ENCODE measurements at regions of chr7 and their contacts with region 1.

Region 1: DNA sequence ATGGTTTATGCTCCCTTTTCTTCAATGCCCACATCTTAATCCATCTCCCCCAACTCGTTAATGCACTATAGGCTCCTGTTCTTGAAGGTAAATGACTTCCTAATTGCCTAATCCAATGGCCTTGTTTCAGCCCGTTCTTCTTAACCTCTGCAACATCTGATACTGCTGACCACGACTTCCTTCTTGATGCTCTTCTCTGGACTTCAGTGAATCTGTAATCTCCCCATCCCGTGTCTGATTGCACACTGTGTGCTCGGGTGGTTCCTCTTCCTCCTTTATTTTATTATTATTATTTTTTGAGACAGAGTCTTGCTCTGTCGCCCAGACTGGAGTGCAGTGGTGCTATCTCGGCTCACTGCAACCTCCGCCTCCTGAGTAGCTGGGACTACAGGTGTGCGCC is 58.9 kb downstream of the HIPK2 start:
- H3K4me3 Mint-ChIP-seq: no peak overlapping the region
- H3K27ac Mint-ChIP-seq: no peak overlapping the region
- H3K4me1 Mint-ChIP-seq: peaks cover 24% of the 10 kb centered on the region
- H3K27me3 Mint-ChIP-seq: no peaks in the 10 kb centered on the region

Region 2: DNA sequence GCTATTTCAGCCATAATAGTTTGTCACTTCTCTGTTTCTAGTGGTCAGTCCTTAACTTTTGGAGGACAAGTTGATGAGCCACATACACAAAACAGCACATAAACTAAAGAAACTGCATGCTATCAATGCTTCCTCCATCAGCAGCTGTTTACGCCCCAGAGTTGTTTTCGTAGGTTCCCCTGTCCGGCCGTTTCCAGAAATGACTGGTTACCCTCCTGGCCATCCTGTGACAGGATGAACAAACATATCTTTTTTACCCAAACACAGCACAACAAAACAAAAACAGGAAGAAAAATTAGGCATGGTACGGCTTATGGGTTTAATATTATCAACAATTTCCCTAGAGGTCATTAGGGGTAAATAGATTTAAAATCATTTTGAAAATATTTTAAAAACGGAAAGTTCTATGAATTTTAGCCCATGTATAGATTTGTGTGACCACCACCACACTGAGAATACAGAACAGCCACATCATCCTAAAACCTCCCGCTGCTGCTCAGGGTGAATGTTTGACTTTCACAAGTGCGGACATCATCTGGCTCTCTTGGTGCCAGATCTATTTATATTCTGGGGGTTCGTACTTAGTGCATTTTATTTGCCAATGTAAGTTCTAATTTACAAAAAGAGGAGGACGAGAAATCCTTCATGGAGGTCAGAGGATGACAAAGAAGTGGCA is 15.9 kb before region 1 on chr7:
- intact Hi-C with region 1: loop called (anchors 2 kb)
- H3K4me3 Mint-ChIP-seq: no peak overlapping the region
- H3K27ac Mint-ChIP-seq: peak overlapping the region; percentile 64
- H3K4me1 Mint-ChIP-seq: peaks cover 55% of the 10 kb centered on the region
- H3K27me3 Mint-ChIP-seq: no peaks in the 10 kb centered on the region

Region 3: GRCh38 chr7:140479062-140479738 is 760.3 kb after region 1 on chr7 and contains the start of gene MKRN1:
- intact Hi-C with region 1: no loop called
- H3K4me3 Mint-ChIP-seq: peak within 1 kb of the TSS; percentile 93
- H3K27ac Mint-ChIP-seq: peak within 1 kb of the TSS; percentile 89
- H3K4me1 Mint-ChIP-seq: peaks cover 27% of the 10 kb centered on the region
- H3K27me3 Mint-ChIP-seq: no peaks in the 10 kb centered on the region